CD14-positive monocyte (primary cell): ENCODE measurements at regions of chr19 and their contacts with region 1.

Region 1: DNA sequence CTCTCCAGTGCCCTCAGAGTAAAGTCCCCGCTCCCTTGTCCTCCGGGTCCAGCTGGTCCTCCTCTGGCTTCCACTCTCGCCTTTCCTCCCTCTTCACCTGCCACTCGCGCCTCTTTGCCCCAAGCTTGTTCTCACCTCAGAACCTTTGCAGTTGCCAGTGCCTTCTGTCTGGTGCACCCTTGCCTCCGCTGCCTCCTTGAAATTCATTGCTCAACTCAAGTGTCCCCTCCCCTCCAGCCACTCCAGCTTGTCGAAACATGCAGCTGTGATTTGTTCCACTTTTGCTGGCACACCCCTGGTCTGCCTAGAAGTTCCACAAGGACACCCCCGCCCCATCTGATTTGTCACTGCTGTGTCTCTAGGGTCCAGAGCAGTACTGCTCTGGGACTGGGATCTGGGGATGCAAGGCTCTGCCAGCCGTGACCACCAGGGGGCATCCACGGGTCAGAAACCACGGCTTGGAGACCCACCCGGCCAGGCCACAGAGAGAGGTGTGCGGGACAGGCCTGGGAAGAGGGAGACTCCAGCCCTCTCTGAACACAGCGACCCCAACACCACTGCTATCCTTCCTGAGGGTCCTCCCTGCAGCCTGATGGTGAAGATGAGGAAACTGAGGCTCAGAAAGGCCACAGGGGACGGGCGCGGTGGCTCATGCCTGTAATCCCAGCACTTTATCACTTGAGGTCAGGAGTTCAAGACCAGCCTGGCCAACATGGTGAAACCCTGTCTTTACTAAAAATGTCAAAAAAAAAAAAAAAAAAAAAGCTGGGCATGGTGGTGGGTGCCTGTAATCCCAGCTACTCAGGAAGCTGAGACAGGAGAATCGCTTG is 49.9 kb downstream of the AP1M1 start:
- DNase-seq: peak; percentile 81 to 88 (median 84)
- H3K4me3 ChIP-seq: peak overlapping the region in 2 of 3 experiments; percentile 5 to 22
- H3K4me3 Mint-ChIP-seq: peak overlapping the region; percentile 51 to 78
- H3K27ac ChIP-seq: peak overlapping the region in 1 of 2 donors; percentile 7
- H3K27ac Mint-ChIP-seq: peak overlapping the region; percentile 71 to 90 (median 84)
- H3K4me1 ChIP-seq: peaks cover 24 to 29% of the 10 kb centered on the region in 2 donors
- H3K4me1 Mint-ChIP-seq: peaks cover 24% of the 10 kb centered on the region
- H3K27me3 ChIP-seq: no peaks in the 10 kb centered on the region
- H3K27me3 Mint-ChIP-seq: peaks cover 1 to 5% (median 3%) of the 10 kb centered on the region in 3 donors
- CTCF ChIP-seq: peak; percentile 94

Region 2: DNA sequence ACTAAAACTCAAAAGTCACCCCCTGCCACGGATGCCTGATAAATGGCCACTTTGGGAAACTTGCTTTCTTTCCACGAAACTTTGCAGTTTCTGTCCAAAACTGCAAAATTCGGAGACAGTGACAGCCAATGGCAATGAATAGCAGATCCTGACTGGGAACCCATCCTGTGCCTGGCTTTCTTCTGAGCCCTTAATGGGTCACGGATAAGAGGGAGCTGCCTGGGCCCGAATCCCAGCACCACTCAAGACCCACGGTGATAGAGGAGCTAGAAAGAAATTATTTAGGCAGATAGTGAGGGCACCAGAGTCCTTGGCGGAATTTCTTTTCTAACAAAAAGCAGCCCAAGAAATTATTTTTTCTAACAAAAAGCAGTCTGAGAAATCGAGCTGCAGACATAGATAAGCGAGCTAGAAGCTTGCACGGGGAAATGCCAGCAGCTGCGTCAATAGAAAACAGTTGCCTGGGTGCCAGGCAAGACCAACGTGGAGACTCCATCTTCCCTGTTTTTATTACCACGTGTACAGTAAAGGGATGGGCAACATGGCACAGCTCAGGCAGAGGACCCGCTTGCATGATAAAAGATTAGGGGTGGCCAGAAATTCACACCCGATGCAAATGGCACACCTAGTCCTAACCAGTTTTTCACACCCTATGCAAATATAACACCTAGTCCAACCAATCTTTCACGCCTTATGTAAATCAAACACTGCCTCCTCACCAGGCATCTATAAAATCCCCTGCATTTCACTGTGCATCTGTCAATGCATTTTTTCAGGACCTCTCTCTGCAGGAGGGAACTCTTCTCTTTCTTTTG is 111.2 kb before region 1 on chr19:
- intact Hi-C with region 1: no loop called
- DNase-seq: no peak
- H3K4me3 ChIP-seq: no peak overlapping the region
- H3K4me3 Mint-ChIP-seq: no peak overlapping the region
- H3K27ac ChIP-seq: peak overlapping the region in 1 of 2 donors; percentile 43
- H3K27ac Mint-ChIP-seq: peak overlapping the region in 4 of 7 donors; percentile 8 to 77 (median 48)
- H3K4me1 ChIP-seq: peaks cover 36 to 71% of the 10 kb centered on the region in 2 donors
- H3K4me1 Mint-ChIP-seq: peaks cover 66% of the 10 kb centered on the region
- H3K27me3 ChIP-seq: no peaks in the 10 kb centered on the region
- H3K27me3 Mint-ChIP-seq: peaks cover 0 to 3% (median under 1%) of the 10 kb centered on the region in 3 donors
- CTCF ChIP-seq: no peak

Region 3: DNA sequence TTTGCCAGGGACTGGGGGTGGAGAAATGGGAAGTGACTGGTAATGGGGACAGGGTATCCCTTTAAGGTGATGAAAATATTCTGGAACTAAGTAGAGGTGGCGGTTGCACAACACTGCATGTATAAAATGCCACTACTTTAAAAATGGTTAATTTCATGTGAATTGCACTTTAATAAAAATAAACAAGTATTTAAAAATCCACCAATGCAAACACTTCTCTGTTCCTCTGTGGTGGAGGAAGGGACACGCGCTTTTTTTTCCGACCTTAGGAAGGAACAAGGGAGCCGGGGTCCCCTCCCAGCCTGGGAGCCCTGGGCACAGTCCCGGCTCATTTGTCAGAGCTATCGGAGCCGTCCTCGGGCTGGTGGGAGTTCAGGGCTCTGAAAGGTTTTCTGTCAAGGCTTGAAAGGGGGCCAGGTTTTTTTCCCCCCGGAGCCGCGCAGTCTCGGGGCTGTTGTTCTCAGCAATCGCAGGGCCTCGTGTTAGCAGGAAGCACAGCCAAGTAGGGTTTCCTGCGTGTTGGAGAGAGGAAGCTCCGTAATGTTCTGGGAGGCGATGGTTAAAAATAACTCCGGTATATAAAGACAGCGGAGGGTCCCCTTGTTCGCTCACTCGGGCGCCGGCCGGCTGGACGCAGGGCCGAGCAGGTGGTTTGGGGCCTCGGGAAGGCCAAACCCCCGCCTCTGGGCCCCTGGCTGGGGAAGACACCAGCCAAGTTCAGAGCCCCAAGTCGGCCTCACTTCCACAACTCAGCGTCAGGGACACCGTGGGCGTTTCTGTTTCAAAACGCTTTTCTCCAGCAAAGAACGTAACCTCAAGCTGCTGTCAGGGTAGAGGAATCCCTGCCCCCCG is 35.9 kb after region 1 on chr19:
- intact Hi-C with region 1: loop called (anchors 5 kb)
- DNase-seq: peak; percentile 68 to 76 (median 72)
- H3K4me3 ChIP-seq: peak overlapping the region; percentile 4 to 60 (median 17)
- H3K4me3 Mint-ChIP-seq: peak overlapping the region; percentile 73 to 83
- H3K27ac ChIP-seq: peak overlapping the region; percentile 92 to 93
- H3K27ac Mint-ChIP-seq: peak overlapping the region; percentile 97 to 99 (median 98)
- H3K4me1 ChIP-seq: peaks cover 73 to 87% of the 10 kb centered on the region in 2 donors
- H3K4me1 Mint-ChIP-seq: peaks cover 85% of the 10 kb centered on the region
- H3K27me3 ChIP-seq: no peaks in the 10 kb centered on the region
- H3K27me3 Mint-ChIP-seq: peaks cover 3 to 19% (median 3%) of the 10 kb centered on the region in 3 donors
- CTCF ChIP-seq: no peak

Region 4: GRCh38 chr19:16382775-16383543 is 135.4 kb after region 1 on chr19:
- intact Hi-C with region 1: loop called (anchors 1 to 2 kb)
- DNase-seq: peak; percentile 71 to 76 (median 75)
- H3K4me3 ChIP-seq: peak overlapping the region in 1 of 3 experiments; percentile 67
- H3K4me3 Mint-ChIP-seq: peak overlapping the region; percentile 66 to 80
- H3K27ac ChIP-seq: peak overlapping the region; percentile 44 to 78
- H3K27ac Mint-ChIP-seq: peak overlapping the region; percentile 79 to 95 (median 89)
- H3K4me1 ChIP-seq: peaks cover 16 to 21% of the 10 kb centered on the region in 2 donors
- H3K4me1 Mint-ChIP-seq: peaks cover 22% of the 10 kb centered on the region
- H3K27me3 ChIP-seq: no peaks in the 10 kb centered on the region
- H3K27me3 Mint-ChIP-seq: peaks cover 0 to 2% (median 2%) of the 10 kb centered on the region in 3 donors
- CTCF ChIP-seq: peak; percentile 89

Region 5: GRCh38 chr19:16462757-16463250 is 215.2 kb after region 1 on chr19:
- intact Hi-C with region 1: no loop called
- DNase-seq: peak in 1 of 3 donors; percentile 58
- H3K4me3 ChIP-seq: no peak overlapping the region
- H3K4me3 Mint-ChIP-seq: no peak overlapping the region
- H3K27ac ChIP-seq: peak overlapping the region in 1 of 2 donors; percentile 48
- H3K27ac Mint-ChIP-seq: peak overlapping the region in 6 of 7 donors; percentile 23 to 82 (median 54)
- H3K4me1 ChIP-seq: peaks cover 9 to 14% of the 10 kb centered on the region in 2 donors
- H3K4me1 Mint-ChIP-seq: peaks cover 44% of the 10 kb centered on the region
- H3K27me3 ChIP-seq: no peaks in the 10 kb centered on the region
- H3K27me3 Mint-ChIP-seq: no peaks in the 10 kb centered on the region
- CTCF ChIP-seq: no peak